ENCODE measurements at regions of chr2 and their contacts with region 1.

Region 1: GRCh38 chr2:177724398-177725287 is 332.1 kb downstream of the AGPS start:
- DNase-seq: peak; percentile 15
- H3K4me3 Mint-ChIP-seq: no peak overlapping the region
- H3K27ac Mint-ChIP-seq: no peak overlapping the region
- H3K4me1 Mint-ChIP-seq: peaks cover 2% of the 10 kb centered on the region
- H3K27me3 Mint-ChIP-seq: peaks cover 34% of the 10 kb centered on the region

Region 2: GRCh38 chr2:177419274-177419673 is 305.4 kb before region 1 on chr2:
- intact Hi-C with region 1: loop called (anchors 10 kb)
- DNase-seq: no peak
- H3K4me3 Mint-ChIP-seq: no peak overlapping the region
- H3K27ac Mint-ChIP-seq: no peak overlapping the region
- H3K4me1 Mint-ChIP-seq: peaks cover 28% of the 10 kb centered on the region
- H3K27me3 Mint-ChIP-seq: no peaks in the 10 kb centered on the region